ENCODE measurements at regions of chr10 and their contacts with region 1.

Region 1: DNA sequence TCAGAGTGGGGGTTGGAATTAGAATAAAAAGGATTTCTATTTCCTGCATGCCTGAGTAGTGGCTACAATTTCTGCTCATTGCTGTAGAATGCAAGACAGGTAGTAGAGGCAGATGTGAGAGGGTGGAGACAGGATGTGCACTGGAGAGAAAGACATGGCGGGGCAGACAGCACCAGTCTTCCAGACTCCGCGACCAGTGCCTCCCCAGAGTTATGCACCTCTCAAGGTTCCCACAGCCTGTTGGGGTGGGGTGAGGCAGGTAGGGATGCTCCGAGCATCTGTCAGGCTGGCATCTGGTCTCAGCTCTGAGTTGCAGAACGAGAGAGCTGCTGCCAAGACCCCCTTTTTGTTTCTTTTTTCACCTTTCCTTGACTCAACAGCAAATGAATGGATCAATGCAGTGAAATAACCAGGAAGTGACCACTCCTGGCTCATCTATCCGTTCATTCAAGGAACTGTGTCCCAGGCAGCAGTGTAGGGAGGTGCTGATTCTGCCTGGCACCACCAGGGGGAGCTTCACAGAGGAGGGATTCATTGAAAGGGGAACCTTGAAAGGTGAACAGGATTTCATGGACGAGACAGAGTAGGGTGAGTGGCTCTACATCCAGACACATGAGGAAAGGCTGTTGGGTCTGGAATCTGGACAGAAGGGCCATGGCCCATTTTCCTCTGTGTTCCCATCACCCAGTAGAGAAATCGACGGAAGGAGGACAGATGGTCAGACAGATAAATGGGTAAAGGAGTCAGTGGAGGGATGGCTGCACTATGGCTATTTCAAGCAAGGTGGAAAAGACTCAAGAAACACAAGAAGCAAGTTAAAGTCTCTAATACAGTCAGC is 17.2 kb upstream of the SLC18A3 start:
- DNase-seq: peak; percentile 68
- H3K4me3 Mint-ChIP-seq: no peak overlapping the region
- H3K27ac Mint-ChIP-seq: no peak overlapping the region
- H3K4me1 Mint-ChIP-seq: no peaks in the 10 kb centered on the region
- H3K27me3 Mint-ChIP-seq: peaks cover 28% of the 10 kb centered on the region

Region 2: DNA sequence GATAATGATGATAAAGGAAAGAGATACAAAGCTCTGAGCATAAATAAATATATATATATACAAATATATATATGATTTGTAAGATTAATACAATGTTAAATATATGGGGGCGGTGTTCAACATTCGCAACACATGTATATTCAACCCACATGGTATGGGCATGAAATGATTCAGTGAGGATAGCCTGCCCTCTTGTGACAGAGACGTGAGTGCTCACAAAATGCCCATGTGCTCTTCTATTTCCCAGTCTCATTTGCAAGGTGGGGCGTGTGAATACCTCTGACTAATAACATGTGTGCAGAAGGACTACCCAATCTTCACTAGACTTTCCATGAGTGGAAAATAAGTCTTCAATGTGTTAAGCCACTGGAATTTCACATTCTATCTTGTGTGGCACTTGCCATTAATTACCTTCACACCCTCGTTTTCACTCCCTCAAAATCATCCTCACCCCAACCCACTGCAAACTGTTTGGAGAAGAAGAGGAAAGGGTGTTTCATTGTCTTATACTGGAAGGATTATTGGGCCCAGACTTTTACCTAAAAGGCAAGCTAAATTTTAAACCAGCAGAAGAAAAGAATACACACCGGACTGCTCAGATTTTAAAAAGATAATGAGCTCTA is 631.5 kb after region 1 on chr10:
- CTCF ChIA-PET with region 1: interaction called, 6 read pairs
- intact Hi-C with region 1: loop called (anchors 1 kb)
- DNase-seq: peak; percentile 55
- H3K4me3 Mint-ChIP-seq: no peak overlapping the region
- H3K27ac Mint-ChIP-seq: no peak overlapping the region
- H3K4me1 Mint-ChIP-seq: peaks cover 4% of the 10 kb centered on the region
- H3K27me3 Mint-ChIP-seq: peaks cover 13% of the 10 kb centered on the region

Region 3: GRCh38 chr10:50275650-50276235 is 682.8 kb after region 1 on chr10:
- CTCF ChIA-PET with region 1: interaction called, 3 read pairs
- intact Hi-C with region 1: loop called (anchors 5 kb)
- DNase-seq: peak; percentile 56
- H3K4me3 Mint-ChIP-seq: no peak overlapping the region
- H3K27ac Mint-ChIP-seq: no peak overlapping the region
- H3K4me1 Mint-ChIP-seq: no peaks in the 10 kb centered on the region
- H3K27me3 Mint-ChIP-seq: peaks cover 10% of the 10 kb centered on the region

Measured in activated naive CD4-positive, alpha-beta T cell treated with anti-CD3 and anti-CD28 coated beads for 36 hours (primary cell).